ENCODE measurements at regions of chr3 and their contacts with region 1.

Region 1: GRCh38 chr3:155032918-155033317 is 47.2 kb upstream of the MME start:
- DNase-seq: no peak
- ATAC-seq: no peak
- H3K4me3 Mint-ChIP-seq: no peak overlapping the region
- H3K27ac Mint-ChIP-seq: no peak overlapping the region
- H3K4me1 Mint-ChIP-seq: no peaks in the 10 kb centered on the region
- H3K27me3 Mint-ChIP-seq: no peaks in the 10 kb centered on the region

Region 2: GRCh38 chr3:154981664-154982063 is 51.3 kb before region 1 on chr3:
- CTCF ChIA-PET with region 1: no interaction called
- POLR2A ChIA-PET with region 1: no interaction called
- intact Hi-C with region 1: loop called in 1 of 2 experiments (anchors 1 kb)
- DNase-seq: no peak
- ATAC-seq: no peak
- H3K4me3 Mint-ChIP-seq: no peak overlapping the region
- H3K27ac Mint-ChIP-seq: no peak overlapping the region
- H3K4me1 Mint-ChIP-seq: no peaks in the 10 kb centered on the region
- H3K27me3 Mint-ChIP-seq: no peaks in the 10 kb centered on the region

Region 3: DNA sequence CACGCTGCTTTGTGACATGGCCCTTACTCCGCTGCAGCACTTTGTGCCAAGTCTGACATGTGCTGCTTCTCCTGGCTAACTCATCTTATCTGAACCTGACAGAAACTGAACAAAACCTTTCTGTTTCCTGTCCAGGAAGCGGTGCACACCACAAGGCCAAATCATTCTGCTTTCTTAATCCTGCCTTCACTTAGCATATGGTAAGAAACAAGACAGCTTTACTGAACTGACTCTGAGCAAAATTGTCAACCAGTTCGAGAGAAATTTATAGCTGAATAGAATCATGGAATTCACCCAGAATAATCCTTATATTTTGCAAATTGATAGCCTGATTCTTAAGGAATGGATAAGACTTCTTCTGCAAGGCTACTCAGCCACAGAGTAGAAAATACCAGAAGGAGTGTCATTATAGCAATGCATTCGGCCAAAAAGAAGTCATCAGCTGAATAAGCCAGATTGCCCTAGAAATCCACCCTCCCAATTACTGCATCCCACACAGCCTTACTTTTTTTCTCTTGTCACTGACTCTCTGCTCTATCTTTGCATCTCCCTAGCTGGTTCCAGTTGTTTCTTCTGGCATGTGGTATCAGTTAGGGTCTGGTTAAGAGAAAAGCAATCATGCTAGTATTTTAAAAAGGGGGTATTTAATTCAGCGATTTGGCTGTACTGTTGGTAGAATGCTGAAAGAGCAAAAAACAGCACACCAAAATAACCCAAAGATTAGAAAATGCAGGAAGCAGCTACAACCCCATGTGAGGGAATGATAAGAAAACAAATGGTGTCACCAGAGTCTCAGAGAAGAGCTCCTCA is 302.2 kb after region 1 on chr3:
- CTCF ChIA-PET with region 1: no interaction called
- POLR2A ChIA-PET with region 1: no interaction called
- intact Hi-C with region 1: no loop called
- DNase-seq: peak; percentile 40
- ATAC-seq: peak; percentile 60
- H3K4me3 Mint-ChIP-seq: no peak overlapping the region
- H3K27ac Mint-ChIP-seq: no peak overlapping the region
- H3K4me1 Mint-ChIP-seq: peaks cover 11% of the 10 kb centered on the region
- H3K27me3 Mint-ChIP-seq: peaks cover 4% of the 10 kb centered on the region

Measured in activated CD4-positive, alpha-beta T cell treated with anti-CD3 and anti-CD28 coated beads for 36 hours (primary cell).